Ascending aorta (tissue), 2 donors: ENCODE measurements at regions of chr1 and their contacts with region 1.

Region 1: DNA sequence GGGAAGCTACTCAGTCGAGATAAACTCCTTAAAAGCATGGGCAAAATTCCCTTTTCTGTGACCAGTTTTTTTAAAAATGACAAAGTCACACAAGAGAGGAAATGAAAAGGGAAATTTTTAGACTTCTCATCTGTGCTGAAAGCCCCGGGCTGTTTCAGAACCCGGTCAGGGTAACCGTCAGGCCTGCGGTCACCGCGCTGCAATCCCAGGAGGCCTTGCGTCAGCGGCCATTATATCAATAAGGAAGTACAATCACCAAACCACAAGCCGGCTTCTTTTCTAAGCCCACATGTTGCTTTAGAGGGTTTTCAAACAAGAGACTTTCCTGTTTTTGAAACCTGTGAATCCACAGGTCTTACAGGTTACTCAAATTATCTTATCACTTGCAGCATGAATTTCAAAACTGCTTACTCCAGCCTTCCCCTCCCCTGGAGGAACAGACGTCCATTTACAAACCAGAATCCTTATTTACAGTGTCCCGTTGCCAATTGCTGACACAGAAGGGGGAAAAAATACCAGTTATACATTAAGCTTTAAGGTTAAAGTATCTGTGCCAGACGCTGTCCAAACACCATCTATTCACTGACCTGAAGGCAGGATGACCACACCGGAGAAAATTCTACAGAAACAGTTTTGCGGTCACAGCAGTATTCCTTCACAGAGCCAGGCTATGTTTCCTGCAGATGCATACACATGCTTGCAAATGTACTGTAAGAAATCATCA is 165.3 kb downstream of the TOMM20 start:
- DNase-seq: peak; percentile 75 to 94
- H3K4me3 ChIP-seq: peak overlapping the region in 1 of 2 donors; percentile 32
- H3K27ac ChIP-seq: peak overlapping the region; percentile 81 to 85
- H3K4me1 ChIP-seq: peaks cover 13 to 41% of the 10 kb centered on the region in 2 donors
- H3K27me3 ChIP-seq: no peaks in the 10 kb centered on the region
- CTCF ChIP-seq: no peak

Region 2: GRCh38 chr1:234925440-234926263 is 37.7 kb before region 1 on chr1:
- intact Hi-C with region 1: loop called (anchors 2 kb)
- DNase-seq: peak in 1 of 2 donors; percentile 81
- H3K4me3 ChIP-seq: no peak overlapping the region
- H3K27ac ChIP-seq: peak overlapping the region; percentile 74 to 78
- H3K4me1 ChIP-seq: peaks cover 5 to 35% of the 10 kb centered on the region in 2 donors
- H3K27me3 ChIP-seq: no peaks in the 10 kb centered on the region
- CTCF ChIP-seq: no peak